ENCODE measurements at regions of chr14 and their contacts with region 1.

Region 1: DNA sequence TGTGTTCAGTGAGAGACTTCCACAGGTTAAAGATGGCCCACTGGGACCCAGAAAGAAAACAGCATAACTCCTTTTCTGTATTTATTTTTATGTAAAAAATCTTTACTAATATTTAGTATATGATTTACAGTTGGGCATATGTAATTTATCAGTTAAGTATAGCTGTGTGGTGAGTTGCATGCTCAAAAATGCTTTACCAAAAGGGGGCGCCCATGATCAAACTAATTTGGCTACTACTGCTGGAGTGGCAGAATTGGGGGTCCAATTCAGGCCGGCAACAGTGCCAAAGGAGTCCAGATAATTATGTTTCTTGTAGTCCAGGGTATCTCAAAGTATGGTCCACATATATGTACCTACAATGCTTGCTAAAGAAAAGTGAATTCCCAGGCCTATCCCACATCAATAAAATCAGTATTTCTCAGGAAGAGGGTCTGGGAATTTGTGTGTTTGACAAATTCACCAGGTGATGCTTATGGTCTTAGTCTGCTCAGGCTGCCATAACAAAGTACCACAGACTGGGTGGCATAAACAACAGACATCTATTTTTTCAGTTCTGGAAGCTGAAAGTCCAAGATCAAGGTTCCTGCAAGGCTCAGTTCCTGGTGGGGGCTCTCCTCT is 152.0 kb downstream of the KTN1 start:
- DNase-seq: peak in 1 of 2 donors; percentile 47
- ATAC-seq: peak in 2 of 8 donors; percentile 20 to 33
- H3K4me3 ChIP-seq: no peak overlapping the region
- H3K27ac ChIP-seq: no peak overlapping the region
- H3K4me1 ChIP-seq: no peaks in the 10 kb centered on the region
- H3K27me3 ChIP-seq: no peaks in the 10 kb centered on the region
- CTCF ChIP-seq: peak; percentile 26 to 76 (median 71)

Region 2: GRCh38 chr14:55654243-55654642 is 77.7 kb before region 1 on chr14:
- intact Hi-C with region 1: no loop called
- DNase-seq: no peak
- ATAC-seq: no peak
- H3K4me3 ChIP-seq: no peak overlapping the region
- H3K27ac ChIP-seq: no peak overlapping the region
- H3K4me1 ChIP-seq: no peaks in the 10 kb centered on the region
- H3K27me3 ChIP-seq: no peaks in the 10 kb centered on the region
- CTCF ChIP-seq: no peak

Region 3: GRCh38 chr14:56100556-56100955 is 368.6 kb after region 1 on chr14:
- intact Hi-C with region 1: loop called in 1 of 10 experiments (anchors 10 kb)
- DNase-seq: no peak
- ATAC-seq: no peak
- H3K4me3 ChIP-seq: no peak overlapping the region
- H3K27ac ChIP-seq: no peak overlapping the region
- H3K4me1 ChIP-seq: peaks cover 0 to 5% (median 0%) of the 10 kb centered on the region in 9 donors
- H3K27me3 ChIP-seq: peaks cover 0 to 11% (median 2%) of the 10 kb centered on the region in 7 donors
- CTCF ChIP-seq: no peak

Measured in heart right ventricle (tissue), 16 donors.